Common myeloid progenitor, CD34-positive (primary cell): ENCODE measurements at regions of chr9 and their contacts with region 1.

Region 1: GRCh38 chr9:37309136-37309535 is 113.4 kb upstream of the GRHPR start:
- DNase-seq: peak; percentile 21 to 42 (median 37)
- H3K4me3 ChIP-seq: no peak overlapping the region
- H3K27ac ChIP-seq: no peak overlapping the region
- H3K4me1 ChIP-seq: no peaks in the 10 kb centered on the region
- H3K27me3 ChIP-seq: no peaks in the 10 kb centered on the region

Region 2: DNA sequence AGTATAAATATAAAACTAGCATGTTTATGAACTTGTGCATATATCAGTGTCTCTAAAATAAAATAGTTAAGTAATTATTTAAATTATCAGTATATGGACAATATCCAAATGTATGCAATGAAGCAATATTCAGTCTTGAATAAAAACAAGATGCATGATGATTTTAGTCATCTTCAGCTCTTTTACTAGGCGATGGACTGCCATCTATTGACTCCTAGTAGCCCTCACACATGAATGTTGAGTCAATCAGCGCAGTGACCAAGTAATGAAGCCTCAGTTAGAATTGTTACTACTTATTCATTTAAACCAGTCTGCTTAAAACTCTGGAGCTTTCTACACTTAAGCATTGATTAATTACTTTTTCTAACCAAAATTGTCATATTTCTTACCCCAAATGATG is 20.4 kb after region 1 on chr9:
- CTCF ChIA-PET with region 1: interaction called, 10 read pairs
- POLR2A ChIA-PET with region 1: no interaction called
- DNase-seq: peak; percentile 31 to 59 (median 55)
- H3K4me3 ChIP-seq: no peak overlapping the region
- H3K27ac ChIP-seq: no peak overlapping the region
- H3K4me1 ChIP-seq: peaks cover 0 to 3% (median 0%) of the 10 kb centered on the region in 4 experiments
- H3K27me3 ChIP-seq: no peaks in the 10 kb centered on the region

Region 3: GRCh38 chr9:37362430-37362829 is 53.3 kb after region 1 on chr9:
- CTCF ChIA-PET with region 1: no interaction called
- POLR2A ChIA-PET with region 1: no interaction called
- DNase-seq: no peak
- H3K4me3 ChIP-seq: no peak overlapping the region
- H3K27ac ChIP-seq: no peak overlapping the region
- H3K4me1 ChIP-seq: no peaks in the 10 kb centered on the region
- H3K27me3 ChIP-seq: no peaks in the 10 kb centered on the region